Gastrocnemius medialis (tissue), 4 donors: ENCODE measurements at regions of chr19 and their contacts with region 1.

Region 1: GRCh38 chr19:33302175-33302973 is at the start of gene CEBPA:
- DNase-seq: peak; percentile 72 to 81
- ATAC-seq: peak; percentile 61 to 67
- H3K4me3 ChIP-seq: peak within 1 kb of the TSS; percentile 80 to 93 (median 84)
- H3K27ac ChIP-seq: peak within 1 kb of the TSS; percentile 92 to 99 (median 96)
- H3K4me1 ChIP-seq: peaks cover 28 to 37% of the 10 kb centered on the region in 2 donors
- H3K27me3 ChIP-seq: no peaks in the 10 kb centered on the region
- CTCF ChIP-seq: peak in 4 of 5 experiments; percentile 67 to 84 (median 80)
- POLR2A ChIP-seq: peak; percentile 99 to 100
- total RNA-seq, gene CEBPA: 11.9 to 29.9 (median 25.5) TPM

Region 2: GRCh38 chr19:32357720-32358119 is 944.7 kb before region 1 on chr19:
- in situ Hi-C with region 1: no loop called
- intact Hi-C with region 1: loop called (anchors 10 kb)
- DNase-seq: no peak
- ATAC-seq: no peak
- H3K4me3 ChIP-seq: no peak overlapping the region
- H3K27ac ChIP-seq: no peak overlapping the region
- H3K4me1 ChIP-seq: peaks cover 0 to 2% of the 10 kb centered on the region in 2 donors
- H3K27me3 ChIP-seq: no peaks in the 10 kb centered on the region
- CTCF ChIP-seq: peak in 1 of 5 experiments; percentile 30
- POLR2A ChIP-seq: no peak

Region 3: DNA sequence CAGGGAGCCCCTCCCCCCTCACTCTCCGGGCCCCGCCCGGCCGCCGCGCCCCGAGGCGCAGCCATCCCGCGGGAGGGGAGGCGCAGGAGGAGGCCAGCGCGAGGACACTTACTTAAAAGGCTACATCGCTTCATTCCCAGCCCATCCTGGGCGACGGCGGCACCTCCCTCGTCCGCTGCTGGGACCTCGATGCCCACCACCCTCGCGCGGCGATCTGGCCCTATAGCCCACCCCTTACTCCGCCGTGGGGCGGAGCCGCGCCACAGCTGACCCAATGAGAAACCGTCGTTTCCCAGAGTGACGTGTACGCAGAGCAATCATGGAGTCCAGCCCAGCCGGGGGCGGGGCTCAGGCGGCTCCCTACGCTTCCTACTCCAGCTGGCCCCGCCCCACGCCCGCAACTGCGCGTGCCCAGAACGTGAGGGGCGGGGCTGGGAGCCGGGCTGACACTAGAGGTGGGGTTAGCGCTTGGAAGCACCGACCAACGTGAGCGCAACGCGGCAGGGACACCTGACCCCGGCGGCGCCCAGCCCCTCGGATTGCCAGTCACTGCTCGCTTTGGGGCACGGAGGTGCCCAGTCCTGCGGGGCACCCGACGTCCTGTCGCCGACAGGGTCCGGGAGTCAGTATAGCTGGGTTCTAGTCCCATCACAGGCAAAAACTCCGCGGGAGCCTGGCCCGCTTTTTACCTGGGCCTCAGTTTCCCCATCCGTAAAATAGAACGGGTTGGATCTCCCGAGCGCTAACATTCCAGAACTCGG is 627.2 kb before region 1 on chr19 and contains the start of gene ANKRD27:
- in situ Hi-C with region 1: no loop called
- intact Hi-C with region 1: loop called (anchors 5 kb)
- DNase-seq: peak; percentile 97 to 99
- ATAC-seq: peak; percentile 85 to 87
- H3K4me3 ChIP-seq: peak within 1 kb of the TSS; percentile 69 to 95 (median 82)
- H3K27ac ChIP-seq: peak within 1 kb of the TSS; percentile 88 to 97 (median 94)
- H3K4me1 ChIP-seq: peaks cover 31 to 46% of the 10 kb centered on the region in 2 donors
- H3K27me3 ChIP-seq: peaks cover 0 to 2% (median 0%) of the 10 kb centered on the region in 3 donors
- CTCF ChIP-seq: no peak
- POLR2A ChIP-seq: peak; percentile 90 to 95
- total RNA-seq, gene ANKRD27: 36.4 to 78.3 (median 53.5) TPM

Region 4: DNA sequence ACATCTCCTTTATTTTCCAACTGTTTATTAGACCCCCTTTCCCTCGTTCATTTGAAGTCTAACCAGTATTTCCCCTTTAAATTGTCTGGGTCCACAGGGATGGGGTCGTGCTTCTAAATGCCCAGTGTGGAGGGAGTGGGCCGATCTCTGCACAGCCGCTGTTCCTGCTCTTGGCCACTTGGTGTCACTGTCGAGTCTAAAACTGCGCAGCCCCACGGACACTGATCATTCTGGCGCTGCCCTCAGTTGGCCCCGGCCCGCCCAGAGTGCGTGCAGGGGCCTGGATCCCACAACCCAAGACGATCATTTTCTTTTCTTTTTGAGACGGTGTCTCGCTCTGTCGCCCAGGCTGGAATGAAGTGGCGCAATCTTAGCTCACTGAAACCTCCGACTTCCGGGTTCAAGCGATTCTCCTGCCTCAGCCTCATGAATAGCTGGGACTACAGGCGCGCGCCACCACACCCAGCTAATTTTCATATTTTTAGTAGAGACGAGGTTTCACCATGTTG is 158.4 kb before region 1 on chr19:
- in situ Hi-C with region 1: no loop called
- intact Hi-C with region 1: loop called (anchors 5 kb)
- DNase-seq: peak; percentile 24 to 44
- ATAC-seq: peak; percentile 96 to 97
- H3K4me3 ChIP-seq: peak overlapping the region in 1 of 4 donors; percentile 31
- H3K27ac ChIP-seq: no peak overlapping the region
- H3K4me1 ChIP-seq: no peaks in the 10 kb centered on the region
- H3K27me3 ChIP-seq: no peaks in the 10 kb centered on the region
- CTCF ChIP-seq: peak; percentile 85 to 96 (median 89)
- POLR2A ChIP-seq: no peak

Region 5: DNA sequence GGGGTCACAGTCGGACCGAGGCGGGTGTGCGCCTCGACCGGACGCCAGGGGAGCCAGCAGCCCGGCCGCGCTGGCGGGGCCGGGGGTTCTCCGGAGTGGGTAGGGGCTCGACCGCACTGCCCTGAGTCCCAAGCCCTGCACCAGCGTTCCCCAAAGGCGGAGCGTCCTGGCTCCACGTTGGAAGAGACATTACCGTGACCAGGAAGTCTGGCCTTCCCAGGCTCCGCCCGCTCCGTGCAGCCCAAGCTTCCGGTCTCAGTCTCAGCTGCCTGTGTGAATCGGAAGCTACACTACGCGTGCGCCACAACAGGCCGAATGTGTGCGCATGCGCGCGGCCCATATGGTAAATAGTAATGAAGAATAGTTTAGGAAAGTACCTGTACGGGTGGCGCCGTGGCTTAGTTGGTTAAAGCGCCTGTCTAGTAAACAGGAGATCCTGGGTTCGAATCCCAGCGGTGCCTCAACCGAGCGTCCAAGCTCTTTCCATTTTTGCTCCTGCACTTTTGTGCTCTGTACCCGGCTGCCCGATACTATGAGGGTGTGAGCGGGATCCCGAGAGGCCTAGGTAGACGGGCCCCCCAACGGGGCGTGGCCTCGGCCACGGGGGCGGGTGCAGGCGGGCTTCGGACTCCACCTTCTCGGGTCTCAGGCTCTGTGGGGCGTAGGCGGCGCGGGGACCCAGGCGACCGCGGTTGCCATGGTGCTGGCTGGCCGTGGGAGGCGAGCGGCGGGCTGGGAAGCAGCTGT is 125.5 kb before region 1 on chr19:
- in situ Hi-C with region 1: no loop called
- intact Hi-C with region 1: loop called (anchors 5 kb)
- DNase-seq: peak; percentile 89 to 96
- ATAC-seq: peak; percentile 96 to 97
- H3K4me3 ChIP-seq: peak overlapping the region; percentile 77 to 100 (median 84)
- H3K27ac ChIP-seq: peak overlapping the region; percentile 89 to 97 (median 92)
- H3K4me1 ChIP-seq: peaks cover 17 to 29% of the 10 kb centered on the region in 2 donors
- H3K27me3 ChIP-seq: no peaks in the 10 kb centered on the region
- CTCF ChIP-seq: peak; percentile 25 to 45 (median 32)
- POLR2A ChIP-seq: peak; percentile 77 to 79

Region 6: DNA sequence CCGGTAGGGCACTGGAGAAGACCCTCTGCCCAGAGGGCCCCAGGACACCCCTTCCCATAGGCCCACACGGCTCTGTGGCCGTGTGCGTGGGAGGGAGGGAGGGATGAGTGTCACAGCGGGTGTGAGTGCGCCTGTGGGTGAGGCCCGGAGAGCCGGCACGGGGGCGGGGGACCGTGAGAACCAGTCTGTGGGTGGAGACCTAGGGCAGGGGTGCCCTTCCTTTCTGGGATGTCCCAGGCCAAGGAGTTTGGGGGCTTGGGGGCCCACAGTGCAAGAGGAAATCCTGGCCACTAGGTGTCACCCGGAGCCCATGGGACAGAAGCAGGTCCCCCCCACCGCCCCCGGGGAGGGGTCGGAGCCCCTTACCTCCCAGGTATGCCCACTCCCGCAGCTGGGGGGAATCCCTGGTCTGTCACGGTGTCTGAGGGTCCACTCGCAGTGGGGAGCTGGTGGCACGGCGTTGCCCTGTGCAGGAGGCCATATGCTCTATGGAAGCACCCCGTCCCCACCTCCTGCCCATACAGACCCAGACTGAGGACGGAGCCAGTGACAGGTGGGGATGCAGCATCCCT is 60.8 kb before region 1 on chr19:
- in situ Hi-C with region 1: no loop called
- intact Hi-C with region 1: loop called (anchors 5 kb)
- DNase-seq: no peak
- ATAC-seq: peak in 1 of 2 donors; percentile 33
- H3K4me3 ChIP-seq: no peak overlapping the region
- H3K27ac ChIP-seq: no peak overlapping the region
- H3K4me1 ChIP-seq: no peaks in the 10 kb centered on the region
- H3K27me3 ChIP-seq: no peaks in the 10 kb centered on the region
- CTCF ChIP-seq: peak; percentile 81 to 91 (median 84)
- POLR2A ChIP-seq: no peak

Region 7: DNA sequence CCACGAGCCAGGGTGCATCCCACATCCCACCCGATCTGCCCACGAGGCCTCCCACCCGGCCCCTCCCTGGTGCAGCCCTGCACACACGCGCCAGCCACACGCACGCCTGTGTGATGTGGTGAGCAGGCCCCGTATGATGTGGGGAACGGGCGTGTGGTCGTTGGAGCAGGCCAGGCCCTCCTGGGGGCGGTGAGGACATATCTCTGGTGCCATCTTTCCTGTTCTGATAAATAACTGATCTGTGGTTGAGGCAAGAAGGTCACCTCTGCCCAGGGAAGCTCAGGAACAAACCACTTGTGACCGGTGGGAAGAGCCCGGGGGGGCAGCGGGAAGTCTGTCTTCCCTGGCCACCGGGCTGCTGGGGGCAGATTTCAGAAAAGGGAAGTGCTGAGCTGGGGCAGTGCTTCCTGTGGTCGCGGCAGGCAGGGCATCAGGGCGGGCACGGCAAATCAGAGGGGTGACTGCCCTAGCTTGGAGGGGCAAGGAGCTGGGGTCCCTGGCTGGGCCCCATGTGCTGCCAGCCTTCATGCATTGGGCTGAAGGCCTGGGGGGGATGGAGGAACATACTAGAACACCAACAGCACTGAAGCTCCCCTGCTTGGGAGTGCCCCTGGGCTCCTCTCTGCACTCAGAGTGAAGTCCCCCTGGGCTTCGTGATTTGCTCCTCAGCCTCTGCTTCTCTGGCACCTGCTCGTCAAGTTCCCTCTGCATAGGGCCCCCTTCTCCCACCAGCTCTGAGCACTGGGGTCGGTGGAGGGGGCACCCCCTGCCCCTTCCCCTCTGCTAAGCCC is 41.6 kb before region 1 on chr19:
- in situ Hi-C with region 1: no loop called
- intact Hi-C with region 1: no loop called
- DNase-seq: no peak
- ATAC-seq: no peak
- H3K4me3 ChIP-seq: no peak overlapping the region
- H3K27ac ChIP-seq: no peak overlapping the region
- H3K4me1 ChIP-seq: no peaks in the 10 kb centered on the region
- H3K27me3 ChIP-seq: no peaks in the 10 kb centered on the region
- CTCF ChIP-seq: no peak
- POLR2A ChIP-seq: no peak

Region 8: GRCh38 chr19:33388725-33389420 is 86.5 kb after region 1 on chr19:
- in situ Hi-C with region 1: loop called in 2 of 4 experiments (anchors 5 to 10 kb)
- intact Hi-C with region 1: loop called (anchors 5 kb)
- DNase-seq: peak in 1 of 2 donors; percentile 82
- ATAC-seq: peak; percentile 40 to 63
- H3K4me3 ChIP-seq: peak overlapping the region in 1 of 4 donors; percentile 10
- H3K27ac ChIP-seq: peak overlapping the region; percentile 79 to 87 (median 84)
- H3K4me1 ChIP-seq: peaks cover 77% of the 10 kb centered on the region in 2 donors
- H3K27me3 ChIP-seq: no peaks in the 10 kb centered on the region
- CTCF ChIP-seq: no peak
- POLR2A ChIP-seq: no peak

Region 9: DNA sequence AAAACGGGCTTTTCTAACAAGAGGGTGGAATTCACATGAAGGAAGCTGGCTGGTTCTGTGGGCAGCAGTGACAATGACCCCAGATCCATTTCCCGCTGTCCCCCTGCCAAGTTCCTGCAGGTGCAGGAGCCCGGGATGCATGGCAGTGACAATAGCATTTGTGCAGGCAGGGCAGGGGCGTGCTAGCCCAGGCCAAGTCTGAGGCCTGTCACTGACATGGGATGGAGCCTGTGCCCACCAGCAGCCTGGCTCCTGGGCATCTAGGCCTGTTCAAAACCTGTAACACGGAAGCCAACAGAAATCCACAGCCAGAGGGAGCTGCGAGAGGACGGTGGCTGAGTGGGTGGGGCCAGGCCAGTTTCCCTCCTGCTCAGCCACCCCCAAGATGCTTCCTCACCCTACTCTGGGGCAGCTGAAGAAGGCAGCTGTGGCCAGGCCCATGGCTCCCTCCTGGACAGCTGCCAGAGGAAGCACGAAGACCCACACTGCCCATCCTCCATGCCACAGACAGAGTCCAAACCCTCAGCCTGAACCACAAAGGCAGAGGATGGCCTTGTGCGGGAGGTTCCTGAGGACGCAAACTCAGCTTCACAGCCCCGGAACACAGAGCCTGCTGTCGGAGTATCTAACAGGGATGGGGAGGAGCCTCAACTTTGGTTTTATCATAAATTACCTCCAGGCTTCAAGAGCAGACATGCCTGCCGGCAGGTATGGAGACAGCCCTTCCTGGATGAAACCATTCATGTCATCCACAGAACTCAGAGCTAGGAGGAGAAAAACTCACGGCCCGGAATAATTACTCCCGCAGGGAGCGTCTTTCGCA is 145.2 kb after region 1 on chr19:
- in situ Hi-C with region 1: no loop called
- intact Hi-C with region 1: no loop called
- DNase-seq: no peak
- ATAC-seq: no peak
- H3K4me3 ChIP-seq: no peak overlapping the region
- H3K27ac ChIP-seq: no peak overlapping the region
- H3K4me1 ChIP-seq: no peaks in the 10 kb centered on the region
- H3K27me3 ChIP-seq: no peaks in the 10 kb centered on the region
- CTCF ChIP-seq: no peak
- POLR2A ChIP-seq: no peak